ENCODE measurements at regions of chr12 and their contacts with region 1.

Region 1: DNA sequence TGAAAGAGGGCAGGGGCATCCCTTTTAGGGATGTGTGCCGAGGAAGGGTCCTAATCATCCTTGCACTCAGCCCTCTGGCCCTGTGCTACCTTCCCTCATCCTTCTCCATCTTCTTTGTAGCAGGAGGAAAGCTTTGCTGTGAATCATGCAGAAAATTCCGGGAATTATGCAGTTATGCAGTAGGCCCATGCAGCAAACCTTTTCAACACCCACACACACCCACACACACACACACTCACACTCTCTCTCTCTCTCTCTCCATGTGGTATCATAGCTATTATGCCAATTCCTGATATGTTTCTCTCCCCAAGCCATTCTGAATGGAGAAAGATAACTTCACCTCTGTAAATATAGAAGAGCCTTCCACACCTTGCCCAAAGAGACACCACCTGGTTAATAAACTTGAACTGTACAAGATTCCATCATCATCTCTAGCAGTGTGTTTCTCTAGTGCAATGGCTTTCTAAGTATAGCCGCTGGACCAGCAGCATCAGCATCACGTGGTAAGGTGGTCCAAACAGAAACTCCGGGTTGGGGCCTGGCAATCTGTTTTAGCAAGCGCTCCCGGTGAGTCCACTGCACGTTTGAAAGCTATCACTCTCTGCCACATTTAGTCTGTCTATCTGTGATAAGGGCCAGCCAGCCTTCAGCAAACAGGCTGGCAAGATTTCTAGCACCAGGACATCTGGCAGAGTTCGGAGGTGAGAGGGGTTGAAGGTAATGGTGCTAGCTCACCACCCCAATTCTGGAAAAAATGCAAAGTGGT is 57.6 kb downstream of the MDM2 start:
- DNase-seq: no peak
- ATAC-seq: no peak
- H3K4me3 ChIP-seq: no peak overlapping the region
- H3K27ac ChIP-seq: no peak overlapping the region
- H3K4me1 ChIP-seq: no peaks in the 10 kb centered on the region
- H3K27me3 ChIP-seq: no peaks in the 10 kb centered on the region
- CTCF ChIP-seq: no peak

Region 2: DNA sequence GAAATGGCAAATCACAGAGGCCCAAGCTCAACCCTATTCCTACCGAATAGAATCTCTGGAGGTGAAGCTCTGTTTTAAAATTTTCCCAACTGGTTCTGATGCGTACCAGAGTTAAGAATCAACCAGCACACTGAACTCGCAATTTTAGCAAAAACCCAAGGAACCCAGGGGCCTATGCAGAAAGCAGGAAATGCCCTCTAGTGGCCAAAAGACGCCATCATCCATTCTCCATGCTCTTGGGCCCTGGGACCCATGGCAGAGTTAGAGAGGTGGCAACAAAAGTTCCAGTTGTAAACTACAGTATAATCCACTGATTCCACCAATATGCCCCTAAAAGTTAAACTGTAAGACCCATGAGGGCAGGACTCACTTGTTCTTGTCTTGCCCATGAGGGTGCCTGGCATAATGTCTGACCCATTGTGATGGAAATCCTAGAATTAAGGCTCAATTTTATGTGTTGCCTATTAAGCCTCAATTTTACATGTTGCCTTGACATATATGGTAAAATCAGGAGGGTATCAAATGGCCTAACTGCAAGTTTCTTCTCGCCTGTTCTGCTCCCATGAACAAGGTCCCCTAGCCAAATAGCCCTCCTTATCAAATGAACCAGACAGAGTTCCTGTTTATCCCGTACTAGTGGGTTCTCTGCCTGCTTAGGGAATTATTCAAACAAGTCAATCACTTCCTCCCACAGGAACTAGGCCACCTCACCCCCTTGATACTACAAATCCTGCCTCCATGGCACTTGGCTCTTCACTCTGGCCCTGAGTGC is 204.9 kb after region 1 on chr12:
- CTCF ChIA-PET with region 1: no interaction called
- POLR2A ChIA-PET with region 1: no interaction called
- in situ Hi-C with region 1: no loop called
- intact Hi-C with region 1: loop called (anchors 2 kb)
- DNase-seq: peak; percentile 63
- ATAC-seq: peak; percentile 93; the same call in 1 of the 2 replicates
- H3K4me3 ChIP-seq: no peak overlapping the region
- H3K27ac ChIP-seq: no peak overlapping the region
- H3K4me1 ChIP-seq: no peaks in the 10 kb centered on the region; the same call in 1 of the 2 replicates
- H3K27me3 ChIP-seq: no peaks in the 10 kb centered on the region
- CTCF ChIP-seq: peak; percentile 95

Region 3: GRCh38 chr12:69157023-69157655 is 291.6 kb after region 1 on chr12:
- CTCF ChIA-PET with region 1: no interaction called
- POLR2A ChIA-PET with region 1: no interaction called
- in situ Hi-C with region 1: no loop called
- intact Hi-C with region 1: loop called (anchors 5 kb)
- DNase-seq: peak; percentile 45
- ATAC-seq: peak; percentile 95
- H3K4me3 ChIP-seq: peak overlapping the region in 1 of 2 experiments; percentile 25; a peak in 1 of 4 replicates
- H3K27ac ChIP-seq: peak overlapping the region; percentile 54
- H3K4me1 ChIP-seq: peaks cover 8% of the 10 kb centered on the region
- H3K27me3 ChIP-seq: no peaks in the 10 kb centered on the region
- CTCF ChIP-seq: peak; percentile 97

Region 4: DNA sequence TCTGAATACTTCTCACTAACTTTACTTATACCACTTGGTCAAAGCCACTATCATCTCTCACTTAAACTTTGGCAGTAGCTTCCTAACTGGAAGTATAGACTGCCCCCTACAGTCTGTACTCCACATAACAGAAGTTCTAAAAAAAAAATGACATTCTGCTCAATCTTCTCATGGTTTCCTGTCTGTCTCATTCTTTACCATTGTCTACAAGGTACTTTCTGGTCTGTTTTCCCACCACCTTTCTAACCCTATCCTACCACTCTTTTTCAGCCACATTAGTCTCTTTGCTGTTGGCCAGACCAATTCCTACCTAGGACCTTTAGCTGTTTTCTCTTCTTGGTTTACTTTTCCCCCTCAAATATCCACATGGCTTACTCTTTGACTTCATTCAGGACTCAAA is 388.5 kb after region 1 on chr12:
- CTCF ChIA-PET with region 1: no interaction called
- POLR2A ChIA-PET with region 1: no interaction called
- in situ Hi-C with region 1: no loop called
- intact Hi-C with region 1: loop called (anchors 5 kb)
- DNase-seq: peak; percentile 17
- ATAC-seq: no peak
- H3K4me3 ChIP-seq: no peak overlapping the region
- H3K27ac ChIP-seq: no peak overlapping the region
- H3K4me1 ChIP-seq: peaks cover 4% of the 10 kb centered on the region; the same call in 1 of the 2 replicates
- H3K27me3 ChIP-seq: no peaks in the 10 kb centered on the region
- CTCF ChIP-seq: peak; percentile 69; the same call in 1 of the 2 replicates

Measured in Panc1 (cell line).